Naive thymus-derived CD4-positive, alpha-beta T cell (primary cell): ENCODE measurements at regions of chr3 and their contacts with region 1.

Region 1: DNA sequence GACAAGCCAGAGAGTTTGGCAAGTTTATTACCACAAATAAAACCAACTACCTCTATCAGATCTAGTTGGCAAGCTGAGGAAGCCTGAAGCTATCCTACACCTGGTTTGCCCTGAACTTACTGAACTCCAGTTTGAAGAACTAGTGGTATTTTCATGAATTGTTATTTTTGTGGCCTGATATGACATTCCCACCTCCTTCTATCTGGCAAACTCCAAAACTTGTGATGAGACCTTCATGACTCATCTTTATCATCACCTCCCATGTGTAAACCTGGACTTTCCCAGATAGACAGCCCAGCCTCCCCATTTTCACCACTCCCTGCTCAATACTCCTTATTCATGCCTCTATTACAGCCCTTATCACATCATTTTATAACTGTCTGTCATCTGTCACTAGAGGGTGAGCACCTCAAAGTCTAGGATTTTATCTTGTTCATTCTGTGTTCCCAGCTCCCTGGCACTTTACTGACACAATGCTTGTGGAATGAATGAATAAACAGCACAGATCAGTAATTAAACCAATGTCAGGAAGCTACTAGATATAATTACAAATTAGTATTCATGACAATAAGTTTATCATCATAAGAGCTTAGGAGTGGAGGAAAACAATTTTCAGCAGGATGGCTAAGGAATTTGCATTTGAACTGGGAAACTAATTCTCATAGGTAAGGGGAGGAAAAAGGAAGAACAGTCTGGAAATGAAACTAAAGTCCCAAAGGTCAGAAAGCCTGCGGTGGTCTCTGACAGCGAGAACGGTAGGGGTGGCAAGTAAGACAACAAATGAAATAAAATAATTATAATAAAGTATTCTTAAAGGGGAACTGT is 13.2 kb upstream of the TRANK1 start:
- DNase-seq: no peak
- ATAC-seq: no peak
- H3K4me3 ChIP-seq: no peak overlapping the region
- H3K4me3 Mint-ChIP-seq: peak overlapping the region in 4 of 10 donors; percentile 2 to 21 (median 13)
- H3K27ac ChIP-seq: no peak overlapping the region
- H3K27ac Mint-ChIP-seq: peak overlapping the region in 8 of 9 donors; percentile 12 to 88 (median 45)
- H3K4me1 ChIP-seq: no peaks in the 10 kb centered on the region
- H3K4me1 Mint-ChIP-seq: peaks cover 2 to 12% (median 11%) of the 10 kb centered on the region in 7 donors
- H3K27me3 ChIP-seq: no peaks in the 10 kb centered on the region
- H3K27me3 Mint-ChIP-seq: peaks cover 0 to 3% (median 0%) of the 10 kb centered on the region in 5 donors

Region 2: DNA sequence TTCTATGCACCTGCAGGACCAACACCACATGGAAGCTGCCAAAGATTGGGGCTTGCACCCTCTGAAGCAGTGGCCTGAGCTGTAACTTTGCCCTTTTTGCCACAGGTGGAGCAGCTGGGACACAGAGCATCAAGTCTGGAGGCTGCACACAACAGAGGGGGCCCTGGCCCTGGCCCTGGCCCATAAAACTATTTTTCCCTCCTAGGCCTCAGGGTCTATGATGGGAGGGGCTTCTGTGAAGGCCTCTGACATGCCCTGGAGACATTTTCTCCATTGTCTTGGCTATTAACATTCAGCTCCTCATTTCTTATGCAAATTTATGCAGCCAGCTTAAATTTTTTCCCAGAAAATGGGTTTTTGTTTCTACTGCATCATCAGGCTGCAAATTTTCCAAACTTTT is 983.2 kb before region 1 on chr3:
- CTCF ChIA-PET with region 1: no interaction called
- POLR2A ChIA-PET with region 1: no interaction called
- intact Hi-C with region 1: no loop called
- DNase-seq: no peak
- ATAC-seq: no peak
- H3K4me3 ChIP-seq: no peak overlapping the region
- H3K4me3 Mint-ChIP-seq: no peak overlapping the region
- H3K27ac ChIP-seq: no peak overlapping the region
- H3K27ac Mint-ChIP-seq: no peak overlapping the region
- H3K4me1 ChIP-seq: no peaks in the 10 kb centered on the region
- H3K4me1 Mint-ChIP-seq: peaks cover 0 to 13% (median 5%) of the 10 kb centered on the region in 7 donors
- H3K27me3 ChIP-seq: no peaks in the 10 kb centered on the region
- H3K27me3 Mint-ChIP-seq: peaks cover 0 to 8% (median 0%) of the 10 kb centered on the region in 5 donors

Region 3: DNA sequence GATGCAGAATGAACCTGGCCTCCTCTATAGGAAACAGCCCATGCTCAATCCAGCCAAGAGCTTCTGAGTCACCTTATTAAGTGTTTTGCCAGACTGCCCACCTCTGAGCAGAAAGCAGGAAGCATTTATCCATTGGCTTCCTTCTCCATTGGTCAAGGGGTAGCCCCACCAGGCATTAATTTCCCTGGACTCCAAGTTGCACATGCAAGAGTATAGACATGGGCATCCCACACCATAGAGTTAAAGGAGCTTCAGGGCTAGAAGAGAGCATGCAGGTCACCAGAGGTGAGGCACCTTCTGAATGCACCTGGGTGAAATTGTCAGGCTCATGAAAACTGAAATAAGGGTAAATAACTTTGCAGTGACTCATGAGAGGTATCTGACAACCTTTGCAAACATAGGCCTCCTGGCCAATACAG is 808.6 kb before region 1 on chr3:
- CTCF ChIA-PET with region 1: no interaction called
- POLR2A ChIA-PET with region 1: no interaction called
- intact Hi-C with region 1: loop called in 1 of 2 experiments (anchors 10 kb)
- DNase-seq: no peak
- ATAC-seq: no peak
- H3K4me3 ChIP-seq: no peak overlapping the region
- H3K4me3 Mint-ChIP-seq: no peak overlapping the region
- H3K27ac ChIP-seq: no peak overlapping the region
- H3K27ac Mint-ChIP-seq: no peak overlapping the region
- H3K4me1 ChIP-seq: no peaks in the 10 kb centered on the region
- H3K4me1 Mint-ChIP-seq: peaks cover 0 to 2% (median 0%) of the 10 kb centered on the region in 7 donors
- H3K27me3 ChIP-seq: no peaks in the 10 kb centered on the region
- H3K27me3 Mint-ChIP-seq: peaks cover 0 to 5% (median 0%) of the 10 kb centered on the region in 5 donors

Region 4: DNA sequence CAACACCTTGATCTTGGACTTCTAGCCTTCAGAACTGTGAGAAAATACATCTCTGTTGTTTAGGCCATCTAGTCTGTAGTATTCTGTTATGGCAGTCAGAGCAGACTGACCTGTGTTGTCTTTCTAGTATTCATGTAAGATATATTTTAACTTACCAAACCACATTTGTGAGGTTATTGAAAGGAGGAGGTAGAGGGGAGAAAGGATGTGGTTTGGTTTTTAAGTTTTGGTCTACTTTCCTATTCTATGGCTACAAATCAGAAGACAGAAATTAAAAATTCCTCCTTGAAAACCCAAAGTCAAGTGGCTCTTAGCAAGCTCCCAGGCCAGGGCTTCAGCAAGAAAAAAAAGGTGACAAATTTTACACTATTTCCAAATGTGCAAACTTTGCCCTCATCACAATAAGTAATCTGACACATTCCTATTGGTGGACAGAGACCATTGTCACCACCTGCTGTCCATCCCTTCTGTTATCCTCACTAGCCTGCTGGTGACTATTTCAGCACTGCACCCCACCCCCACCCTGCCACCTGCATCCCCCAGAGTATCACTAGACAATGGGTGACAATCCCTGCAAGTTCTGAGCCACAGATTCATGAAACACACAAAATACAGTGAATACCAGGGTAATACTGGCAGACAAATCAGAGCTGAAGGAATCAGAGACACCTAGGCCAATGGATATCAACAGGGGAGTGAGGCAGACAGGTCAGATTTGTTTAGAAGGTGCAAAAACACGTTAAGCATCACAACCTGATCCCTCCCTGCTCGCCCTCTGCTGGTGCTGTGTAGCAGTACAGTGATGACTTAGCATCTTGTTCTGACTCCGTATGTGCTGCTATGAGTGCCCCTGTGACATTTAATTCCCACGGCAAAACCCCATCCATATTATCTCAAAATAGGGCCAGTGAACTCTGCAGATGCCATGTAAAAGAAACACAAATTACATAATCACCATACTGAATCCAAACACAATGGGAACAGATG is 114.7 kb before region 1 on chr3:
- CTCF ChIA-PET with region 1: interaction called, 7 read pairs
- POLR2A ChIA-PET with region 1: no interaction called
- intact Hi-C with region 1: loop called in 1 of 2 experiments (anchors 2 kb)
- DNase-seq: peak in 7 of 9 donors; percentile 16 to 48 (median 25)
- ATAC-seq: peak; percentile 86
- H3K4me3 ChIP-seq: no peak overlapping the region
- H3K4me3 Mint-ChIP-seq: peak overlapping the region in 9 of 10 donors; percentile 9 to 62 (median 50)
- H3K27ac ChIP-seq: no peak overlapping the region
- H3K27ac Mint-ChIP-seq: peak overlapping the region; percentile 12 to 77 (median 45)
- H3K4me1 ChIP-seq: peaks cover 16 to 18% of the 10 kb centered on the region in 2 donors
- H3K4me1 Mint-ChIP-seq: peaks cover 18 to 41% (median 36%) of the 10 kb centered on the region in 7 donors
- H3K27me3 ChIP-seq: no peaks in the 10 kb centered on the region
- H3K27me3 Mint-ChIP-seq: no peaks in the 10 kb centered on the region

Region 5: GRCh38 chr3:36876181-36876936 is 81.7 kb before region 1 on chr3:
- CTCF ChIA-PET with region 1: interaction called, 13 read pairs
- POLR2A ChIA-PET with region 1: no interaction called
- intact Hi-C with region 1: loop called (anchors 1 to 2 kb)
- DNase-seq: peak in 8 of 9 donors; percentile 26 to 73 (median 62)
- ATAC-seq: peak; percentile 93
- H3K4me3 ChIP-seq: peak overlapping the region; percentile 39
- H3K4me3 Mint-ChIP-seq: peak overlapping the region; percentile 67 to 88 (median 80)
- H3K27ac ChIP-seq: peak overlapping the region; percentile 73
- H3K27ac Mint-ChIP-seq: peak overlapping the region; percentile 91 to 96 (median 95)
- H3K4me1 ChIP-seq: peaks cover 21 to 45% of the 10 kb centered on the region in 2 donors
- H3K4me1 Mint-ChIP-seq: peaks cover 34 to 68% (median 55%) of the 10 kb centered on the region in 7 donors
- H3K27me3 ChIP-seq: no peaks in the 10 kb centered on the region
- H3K27me3 Mint-ChIP-seq: peaks cover 0 to 7% (median 0%) of the 10 kb centered on the region in 5 donors

Region 6: DNA sequence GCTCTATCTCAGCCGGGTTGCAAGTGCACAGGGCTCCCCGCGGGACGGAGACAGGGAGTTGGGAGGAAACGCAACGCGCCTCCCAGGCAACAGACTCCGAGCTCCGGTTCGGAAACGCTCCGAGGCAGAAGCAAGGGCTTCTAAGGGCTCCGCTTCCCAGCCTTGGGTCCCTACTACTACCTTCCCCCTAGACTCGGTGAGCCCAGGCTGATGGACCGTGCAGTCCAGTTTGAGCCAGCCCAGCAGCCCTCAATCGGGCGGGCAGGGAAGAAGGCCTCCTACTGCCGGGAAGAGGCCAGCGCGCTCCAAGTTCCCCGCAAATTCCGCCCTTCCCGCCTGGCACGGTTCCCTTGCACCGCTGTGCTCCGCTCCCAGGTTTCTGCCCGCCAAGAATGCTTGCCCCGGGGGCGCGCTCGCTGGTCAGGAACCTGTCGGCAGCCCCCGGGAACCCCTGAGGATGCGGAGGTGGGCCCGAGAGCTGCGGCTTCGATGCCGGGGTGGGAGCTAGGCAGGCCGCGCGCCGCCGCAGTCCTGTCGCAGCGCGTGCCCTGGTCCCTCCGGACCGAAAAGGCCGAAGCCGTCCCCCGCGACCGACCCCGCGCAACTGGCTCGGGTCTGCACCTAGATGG is 13.9 kb before region 1 on chr3:
- CTCF ChIA-PET with region 1: interaction called, 10 read pairs
- POLR2A ChIA-PET with region 1: interaction called, 8 read pairs
- intact Hi-C with region 1: loop called (anchors 2 kb)
- DNase-seq: peak; percentile 14 to 42 (median 28)
- ATAC-seq: peak; percentile 46
- H3K4me3 ChIP-seq: peak overlapping the region; percentile 70
- H3K4me3 Mint-ChIP-seq: peak overlapping the region; percentile 79 to 91 (median 85)
- H3K27ac ChIP-seq: peak overlapping the region; percentile 74
- H3K27ac Mint-ChIP-seq: peak overlapping the region; percentile 42 to 87 (median 63)
- H3K4me1 ChIP-seq: peaks cover 5 to 6% of the 10 kb centered on the region in 2 donors
- H3K4me1 Mint-ChIP-seq: peaks cover 0 to 33% (median 26%) of the 10 kb centered on the region in 7 donors
- H3K27me3 ChIP-seq: no peaks in the 10 kb centered on the region
- H3K27me3 Mint-ChIP-seq: peaks cover 0 to 28% (median 0%) of the 10 kb centered on the region in 5 donors